WTC11 (cell line): ENCODE measurements at regions of chr12 and their contacts with region 1.

Region 1: GRCh38 chr12:99386907-99387306 is 260.6 kb upstream of the GARIN6 start:
- DNase-seq: no peak
- ATAC-seq: peak; percentile 62
- H3K4me3 Mint-ChIP-seq: no peak overlapping the region
- H3K27ac Mint-ChIP-seq: no peak overlapping the region
- H3K4me1 Mint-ChIP-seq: peaks cover 10% of the 10 kb centered on the region
- H3K27me3 Mint-ChIP-seq: no peaks in the 10 kb centered on the region
- CTCF ChIP-seq: peak; percentile 75

Region 2: DNA sequence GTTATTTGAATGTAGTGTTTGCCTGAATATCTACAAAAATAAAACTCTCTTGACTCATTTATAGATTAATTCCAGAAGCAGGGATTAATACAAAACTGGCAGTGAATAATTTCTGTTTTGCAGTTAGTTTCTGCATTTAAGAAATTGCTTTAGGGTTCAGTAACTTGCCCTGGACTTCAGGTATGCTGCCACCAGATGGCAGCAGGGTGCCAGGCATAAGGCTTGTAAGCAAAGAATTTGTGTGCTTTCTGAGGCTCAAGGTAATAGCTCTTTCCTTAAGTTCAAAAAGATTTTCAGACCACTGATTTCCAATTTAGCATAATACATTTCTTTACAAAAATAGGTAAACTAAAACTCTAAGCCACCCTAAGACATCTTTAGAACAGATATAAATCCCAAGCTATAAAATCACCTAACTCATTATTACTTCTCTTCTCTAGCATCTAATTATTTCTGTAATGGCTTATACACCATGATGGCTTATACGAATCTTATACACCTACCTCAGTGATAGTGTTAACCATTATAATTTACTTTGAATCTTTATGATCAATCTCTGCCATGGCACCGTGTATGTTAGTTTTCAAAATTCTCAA is 343.5 kb before region 1 on chr12:
- CTCF ChIA-PET with region 1: interaction called, 22 read pairs
- POLR2A ChIA-PET with region 1: no interaction called
- DNase-seq: peak; percentile 77
- ATAC-seq: peak; percentile 65
- H3K4me3 Mint-ChIP-seq: no peak overlapping the region
- H3K27ac Mint-ChIP-seq: no peak overlapping the region
- H3K4me1 Mint-ChIP-seq: peaks cover 10% of the 10 kb centered on the region
- H3K27me3 Mint-ChIP-seq: no peaks in the 10 kb centered on the region; the same call in 1 of the 2 replicates
- CTCF ChIP-seq: peak; percentile 91

Region 3: GRCh38 chr12:99343960-99344359 is 42.9 kb before region 1 on chr12:
- CTCF ChIA-PET with region 1: no interaction called
- POLR2A ChIA-PET with region 1: no interaction called
- DNase-seq: no peak
- ATAC-seq: no peak; the same call in 1 of the 2 replicates
- H3K4me3 Mint-ChIP-seq: no peak overlapping the region
- H3K27ac Mint-ChIP-seq: no peak overlapping the region
- H3K4me1 Mint-ChIP-seq: peaks cover 9% of the 10 kb centered on the region; the same call in 1 of the 2 replicates
- H3K27me3 Mint-ChIP-seq: no peaks in the 10 kb centered on the region
- CTCF ChIP-seq: no peak

Region 4: GRCh38 chr12:99450231-99450630 is 63.3 kb after region 1 on chr12:
- CTCF ChIA-PET with region 1: no interaction called
- POLR2A ChIA-PET with region 1: no interaction called
- DNase-seq: no peak
- ATAC-seq: no peak
- H3K4me3 Mint-ChIP-seq: no peak overlapping the region
- H3K27ac Mint-ChIP-seq: no peak overlapping the region
- H3K4me1 Mint-ChIP-seq: peaks cover 21% of the 10 kb centered on the region
- H3K27me3 Mint-ChIP-seq: no peaks in the 10 kb centered on the region
- CTCF ChIP-seq: no peak

Region 5: DNA sequence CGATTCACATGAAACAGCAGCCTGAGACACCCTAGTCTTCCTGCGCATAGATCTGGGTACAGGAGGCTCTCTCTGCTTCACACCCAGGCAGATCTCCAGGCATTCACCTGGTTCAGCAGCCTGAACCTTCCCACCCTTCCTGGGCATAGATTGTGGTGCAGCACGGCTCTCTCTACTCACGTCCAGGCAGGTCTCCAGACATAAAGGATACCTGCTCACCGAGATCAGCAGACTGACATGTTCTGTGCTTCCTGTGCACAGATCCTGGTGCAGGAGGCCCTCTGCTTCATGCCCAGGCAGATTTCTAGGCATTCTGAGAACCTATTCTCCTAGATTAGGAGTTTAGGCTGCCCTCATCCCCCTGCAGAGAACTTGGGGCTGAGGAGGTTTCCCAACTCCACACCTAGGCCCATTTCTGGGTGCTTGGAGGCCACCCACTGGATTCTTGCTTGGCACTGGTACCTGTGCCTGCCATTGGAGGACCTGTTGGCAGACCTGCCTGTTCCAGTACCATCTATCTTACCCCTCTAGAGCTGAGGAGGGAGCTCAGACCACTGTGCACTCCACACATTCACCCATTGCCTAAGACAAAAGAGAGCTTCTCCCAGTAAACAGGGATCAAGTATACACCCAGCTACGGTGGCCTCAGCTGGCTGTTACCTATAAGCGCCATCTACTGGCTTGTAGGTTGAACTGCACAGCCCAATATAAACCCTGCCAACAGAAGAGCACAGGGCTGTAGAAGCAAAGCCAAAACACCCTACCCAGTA is 232.7 kb after region 1 on chr12:
- CTCF ChIA-PET with region 1: interaction called, 35 read pairs
- POLR2A ChIA-PET with region 1: no interaction called
- DNase-seq: peak; percentile 49
- ATAC-seq: peak; percentile 100
- H3K4me3 Mint-ChIP-seq: no peak overlapping the region
- H3K27ac Mint-ChIP-seq: no peak overlapping the region
- H3K4me1 Mint-ChIP-seq: peaks cover 13% of the 10 kb centered on the region
- H3K27me3 Mint-ChIP-seq: no peaks in the 10 kb centered on the region
- CTCF ChIP-seq: peak; percentile 72

Region 6: GRCh38 chr12:99658671-99659349 is 271.9 kb after region 1 on chr12:
- CTCF ChIA-PET with region 1: interaction called, 12 read pairs
- POLR2A ChIA-PET with region 1: no interaction called
- DNase-seq: no peak
- ATAC-seq: no peak
- H3K4me3 Mint-ChIP-seq: no peak overlapping the region
- H3K27ac Mint-ChIP-seq: no peak overlapping the region
- H3K4me1 Mint-ChIP-seq: peaks cover 9% of the 10 kb centered on the region
- H3K27me3 Mint-ChIP-seq: no peaks in the 10 kb centered on the region
- CTCF ChIP-seq: no peak

Region 7: DNA sequence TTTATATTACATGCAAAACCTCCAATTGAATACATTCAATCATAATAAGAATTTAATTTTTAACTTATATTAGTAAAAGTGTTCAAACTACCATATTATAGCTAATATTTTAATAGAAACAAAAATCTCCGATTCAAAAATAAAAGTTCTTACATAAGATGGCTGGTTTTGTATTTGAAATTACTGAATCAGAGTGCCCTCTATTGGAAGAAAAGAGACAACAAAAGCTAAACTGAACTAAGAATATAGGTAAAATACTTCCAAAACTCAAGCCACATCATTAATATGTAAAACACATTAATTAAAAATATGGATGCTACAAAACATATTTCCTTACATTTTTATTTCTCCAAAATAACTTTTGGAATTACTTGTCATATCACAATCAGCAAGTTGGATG is 380.9 kb after region 1 on chr12:
- CTCF ChIA-PET with region 1: interaction called, 30 read pairs
- POLR2A ChIA-PET with region 1: no interaction called
- DNase-seq: no peak
- ATAC-seq: no peak
- H3K4me3 Mint-ChIP-seq: no peak overlapping the region
- H3K27ac Mint-ChIP-seq: no peak overlapping the region
- H3K4me1 Mint-ChIP-seq: peaks cover 11% of the 10 kb centered on the region
- H3K27me3 Mint-ChIP-seq: no peaks in the 10 kb centered on the region
- CTCF ChIP-seq: no peak